Right cardiac atrium (tissue), 5 donors: ENCODE measurements at regions of chr6 and their contacts with region 1.

Region 1: DNA sequence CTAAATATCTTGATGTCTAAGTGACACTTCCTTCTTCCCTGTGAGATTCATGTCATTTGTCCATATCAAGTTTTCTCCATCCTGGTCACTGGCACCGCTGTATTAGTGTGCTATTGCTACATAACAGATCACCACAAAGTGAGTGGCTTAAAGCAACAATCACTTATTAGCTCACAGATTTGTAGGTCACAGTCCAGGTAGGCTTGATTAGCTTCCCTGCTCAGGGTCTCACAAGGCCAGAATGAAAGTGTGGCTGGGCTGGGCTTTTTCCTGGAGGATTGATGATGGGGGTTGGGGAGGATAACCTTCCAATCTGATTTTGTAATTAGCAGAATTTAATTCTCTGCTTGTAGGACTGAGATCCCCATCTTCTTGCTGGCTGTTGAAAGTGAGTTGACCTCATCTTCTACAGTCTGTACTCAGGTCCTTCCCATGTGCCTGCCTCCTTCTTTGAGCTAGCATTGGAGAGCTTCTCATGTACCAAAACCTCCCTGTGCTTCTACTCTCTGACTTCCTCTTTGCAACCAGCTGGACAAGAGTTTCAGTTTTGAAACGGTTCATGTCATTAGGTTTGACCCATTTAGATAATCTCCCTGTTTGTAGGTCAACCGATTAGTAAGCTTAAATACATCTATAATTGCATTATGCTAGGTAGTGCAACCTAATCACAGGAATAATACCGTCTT is 152.4 kb upstream of the MAN1A1 start:
- DNase-seq: no peak
- ATAC-seq: no peak
- H3K4me3 ChIP-seq: no peak overlapping the region
- H3K27ac ChIP-seq: no peak overlapping the region
- H3K4me1 ChIP-seq: no peaks in the 10 kb centered on the region
- H3K27me3 ChIP-seq: no peaks in the 10 kb centered on the region

Region 2: GRCh38 chr6:118788702-118789101 is 713.2 kb before region 1 on chr6:
- intact Hi-C with region 1: no loop called
- DNase-seq: no peak
- ATAC-seq: no peak
- H3K4me3 ChIP-seq: no peak overlapping the region
- H3K27ac ChIP-seq: no peak overlapping the region
- H3K4me1 ChIP-seq: peaks cover 3% of the 10 kb centered on the region
- H3K27me3 ChIP-seq: no peaks in the 10 kb centered on the region

Region 3: DNA sequence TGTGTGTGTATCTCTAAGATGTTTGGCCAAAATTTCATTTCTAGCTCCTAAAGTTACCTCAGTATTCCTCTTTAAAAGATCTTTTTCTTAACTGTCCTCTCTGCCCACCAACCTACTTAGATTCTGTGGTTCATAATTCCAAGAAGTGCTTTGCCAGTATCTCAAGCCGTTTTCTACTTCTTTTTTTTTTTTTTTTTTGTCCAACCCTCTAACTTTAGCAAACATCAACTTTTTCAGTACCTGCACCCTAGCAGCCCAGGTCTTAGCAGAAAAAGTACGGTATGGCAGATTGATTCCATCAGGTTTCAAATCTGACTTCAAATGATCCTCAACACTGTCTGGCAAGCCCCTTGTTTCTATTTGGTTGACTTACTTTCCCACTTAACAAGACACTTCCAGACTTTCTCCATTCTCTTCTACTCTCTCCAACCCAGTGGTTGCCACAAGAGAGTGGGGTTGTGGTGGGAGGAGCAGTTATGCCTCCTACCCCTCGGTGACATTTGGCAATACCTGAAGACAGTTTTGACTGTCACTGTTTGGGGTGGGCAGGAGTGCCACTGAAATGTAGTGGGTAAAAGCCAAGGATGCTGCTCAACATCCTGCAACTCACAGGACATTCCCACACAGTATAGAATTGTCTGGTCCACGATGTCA is 141.6 kb before region 1 on chr6:
- intact Hi-C with region 1: loop called in 1 of 4 experiments (anchors 10 kb)
- DNase-seq: no peak
- ATAC-seq: no peak
- H3K4me3 ChIP-seq: no peak overlapping the region
- H3K27ac ChIP-seq: no peak overlapping the region
- H3K4me1 ChIP-seq: no peaks in the 10 kb centered on the region
- H3K27me3 ChIP-seq: no peaks in the 10 kb centered on the region